CD8-positive, alpha-beta T cell (primary cell): ENCODE measurements at regions of chr3 and their contacts with region 1.

Region 1: GRCh38 chr3:30597131-30597768 is 9.2 kb upstream of the TGFBR2 start:
- DNase-seq: no peak
- ATAC-seq: no peak
- H3K4me3 ChIP-seq: no peak overlapping the region
- H3K4me3 Mint-ChIP-seq: no peak overlapping the region
- H3K27ac ChIP-seq: no peak overlapping the region
- H3K27ac Mint-ChIP-seq: no peak overlapping the region
- H3K4me1 ChIP-seq: peaks cover 25% of the 10 kb centered on the region
- H3K4me1 Mint-ChIP-seq: peaks cover 34% of the 10 kb centered on the region
- H3K27me3 ChIP-seq: no peaks in the 10 kb centered on the region
- H3K27me3 Mint-ChIP-seq: no peaks in the 10 kb centered on the region
- CTCF ChIP-seq: no peak

Region 2: GRCh38 chr3:30347679-30348216 is 249.5 kb before region 1 on chr3:
- CTCF ChIA-PET with region 1: no interaction called
- POLR2A ChIA-PET with region 1: no interaction called
- intact Hi-C with region 1: loop called in 1 of 2 experiments (anchors 1 kb)
- DNase-seq: peak in 3 of 9 experiments; percentile 21 to 37 (median 24)
- ATAC-seq: peak; percentile 91
- H3K4me3 ChIP-seq: no peak overlapping the region
- H3K4me3 Mint-ChIP-seq: peak overlapping the region; percentile 0
- H3K27ac ChIP-seq: no peak overlapping the region
- H3K27ac Mint-ChIP-seq: peak overlapping the region; percentile 4
- H3K4me1 ChIP-seq: peaks cover 54% of the 10 kb centered on the region
- H3K4me1 Mint-ChIP-seq: peaks cover 72% of the 10 kb centered on the region
- H3K27me3 ChIP-seq: no peaks in the 10 kb centered on the region
- H3K27me3 Mint-ChIP-seq: no peaks in the 10 kb centered on the region
- CTCF ChIP-seq: no peak